Common myeloid progenitor, CD34-positive (primary cell): ENCODE measurements at regions of chr7 and their contacts with region 1.

Region 1: DNA sequence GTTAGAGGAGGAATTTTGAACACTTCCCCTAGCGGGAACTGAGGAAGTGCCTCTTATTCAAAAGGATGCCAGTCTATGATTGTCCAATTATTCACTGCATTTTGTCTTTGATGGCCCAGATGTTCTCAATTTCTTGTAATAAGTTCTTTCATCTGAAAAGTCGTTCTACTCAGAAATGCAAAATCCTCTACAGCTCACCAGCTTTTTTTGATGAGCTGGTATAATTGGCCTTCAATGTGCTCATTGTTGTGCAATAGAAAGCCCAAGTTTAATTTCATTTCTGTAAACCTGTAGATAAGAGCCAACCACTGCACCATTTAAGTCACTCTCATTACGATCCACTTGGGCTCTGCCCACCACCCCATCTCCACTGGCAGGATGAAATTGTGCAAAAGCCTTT is 978.7 kb upstream of the AUTS2 start:
- DNase-seq: no peak
- H3K4me3 ChIP-seq: no peak overlapping the region
- H3K27ac ChIP-seq: no peak overlapping the region
- H3K4me1 ChIP-seq: no peaks in the 10 kb centered on the region
- H3K27me3 ChIP-seq: no peaks in the 10 kb centered on the region

Region 2: DNA sequence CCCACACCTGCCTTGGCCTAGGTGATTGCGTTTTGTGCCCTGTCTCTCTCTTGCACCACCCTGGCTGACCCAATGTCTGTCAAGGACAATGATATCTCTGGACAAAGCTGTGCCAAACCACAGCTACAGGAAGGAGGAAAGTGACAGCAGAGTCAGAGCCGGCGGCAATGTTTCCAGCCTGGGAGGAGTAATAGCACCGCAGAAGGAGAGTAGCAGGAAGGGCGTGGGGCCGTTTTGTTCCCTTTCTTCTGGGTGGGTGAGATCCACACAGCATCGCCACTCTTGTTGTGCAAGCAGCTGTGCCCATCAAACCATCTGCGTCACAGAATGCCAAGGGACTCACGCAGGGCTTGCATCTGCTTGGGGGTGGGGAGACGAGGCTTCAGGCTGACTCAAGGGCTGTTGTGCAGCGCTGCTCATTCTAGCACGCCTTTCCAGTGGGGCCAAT is 637.1 kb after region 1 on chr7:
- CTCF ChIA-PET with region 1: no interaction called
- POLR2A ChIA-PET with region 1: interaction called, 12 read pairs
- DNase-seq: peak in 2 of 3 donors; percentile 12 to 20
- H3K4me3 ChIP-seq: no peak overlapping the region
- H3K27ac ChIP-seq: no peak overlapping the region
- H3K4me1 ChIP-seq: no peaks in the 10 kb centered on the region
- H3K27me3 ChIP-seq: no peaks in the 10 kb centered on the region